Right ventricle myocardium superior (tissue), 1 donor: ENCODE measurements at regions of chr18 and their contacts with region 1.

Region 1: GRCh38 chr18:70279470-70279869 is 9.4 kb upstream of the SOCS6 start:
- DNase-seq: no peak
- ATAC-seq: no peak

Region 2: GRCh38 chr18:68478246-68478645 is 1801.2 kb before region 1 on chr18:
- intact Hi-C with region 1: loop called (anchors 10 kb)
- DNase-seq: no peak
- ATAC-seq: no peak

Region 3: DNA sequence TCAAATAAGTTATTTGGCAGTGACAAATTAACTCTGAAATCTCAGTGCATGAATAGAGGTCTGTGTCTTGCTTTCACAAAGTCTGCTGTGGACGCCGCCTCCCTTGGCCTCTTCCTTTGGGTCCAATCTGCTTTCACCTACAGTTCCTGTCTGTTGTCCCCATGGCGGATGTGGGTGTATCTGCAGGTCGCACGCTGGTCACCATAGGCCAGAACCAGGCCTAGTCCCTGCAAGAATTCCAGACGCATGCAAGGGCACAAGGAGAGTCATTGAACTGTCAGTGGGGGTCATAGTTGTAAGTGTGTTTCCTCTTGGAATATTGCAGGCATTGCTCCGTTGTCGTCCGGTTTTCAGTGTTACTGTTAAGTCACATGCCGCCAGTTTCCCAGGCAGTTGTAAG is 16.8 kb after region 1 on chr18:
- intact Hi-C with region 1: no loop called
- DNase-seq: no peak
- ATAC-seq: peak; percentile 71

Region 4: DNA sequence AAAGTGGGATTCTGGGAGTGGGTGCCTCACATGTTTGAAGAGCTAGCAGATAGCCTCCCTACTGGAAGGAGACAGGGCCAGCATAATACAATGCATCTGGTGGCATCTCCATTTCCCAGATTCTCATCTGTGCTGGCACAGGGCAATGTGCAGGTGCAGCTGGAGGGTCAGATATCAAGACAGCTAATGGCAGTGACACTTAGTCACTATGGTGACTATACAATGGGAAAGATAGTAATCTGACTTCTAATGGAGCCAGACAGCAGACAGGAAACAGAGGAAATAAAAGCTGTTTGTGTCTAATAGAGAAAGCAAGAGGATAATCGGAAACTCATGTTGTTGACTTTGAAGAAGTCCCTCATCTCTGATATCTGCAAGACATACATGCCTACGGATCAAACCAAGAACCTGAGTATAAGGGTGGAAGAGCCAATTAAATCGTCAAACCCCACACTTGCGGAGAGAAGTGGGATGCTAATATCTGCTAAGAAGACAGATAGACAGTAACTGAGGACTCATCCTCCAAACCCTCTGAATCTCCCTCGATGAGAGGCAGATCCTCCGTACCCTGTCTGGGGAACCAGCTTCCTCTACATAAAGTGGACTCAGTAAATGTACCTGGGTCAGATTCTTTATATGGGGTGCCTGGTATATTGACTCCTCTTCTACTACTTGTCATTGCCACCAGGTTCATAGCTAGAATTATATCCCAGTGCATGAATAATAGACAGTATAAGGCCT is 702.1 kb after region 1 on chr18:
- intact Hi-C with region 1: no loop called
- DNase-seq: no peak
- ATAC-seq: no peak